Activated CD4-positive, alpha-beta T cell treated with anti-CD3 and anti-CD28 coated beads, Interleukin-2, amount 10 ng/mL, durations not matched to agents 24 days and 14 days (primary cell): ENCODE measurements at regions of chr13 and their contacts with region 1.

Region 1: GRCh38 chr13:41222259-41222852 is 28.0 kb upstream of the KBTBD7 start:
- DNase-seq: peak; percentile 86
- H3K4me3 Mint-ChIP-seq: no peak overlapping the region
- H3K27ac Mint-ChIP-seq: no peak overlapping the region
- H3K4me1 Mint-ChIP-seq: no peaks in the 10 kb centered on the region
- H3K27me3 Mint-ChIP-seq: no peaks in the 10 kb centered on the region

Region 2: GRCh38 chr13:40922437-40923040 is 299.8 kb before region 1 on chr13:
- intact Hi-C with region 1: no loop called
- DNase-seq: no peak
- H3K4me3 Mint-ChIP-seq: peak overlapping the region; percentile 73
- H3K27ac Mint-ChIP-seq: peak overlapping the region; percentile 80
- H3K4me1 Mint-ChIP-seq: peaks cover 13% of the 10 kb centered on the region
- H3K27me3 Mint-ChIP-seq: no peaks in the 10 kb centered on the region

Region 3: GRCh38 chr13:41054212-41054877 is 168.0 kb before region 1 on chr13:
- intact Hi-C with region 1: loop called (anchors 1 kb)
- DNase-seq: peak; percentile 85
- H3K4me3 Mint-ChIP-seq: no peak overlapping the region
- H3K27ac Mint-ChIP-seq: no peak overlapping the region
- H3K4me1 Mint-ChIP-seq: peaks cover 47% of the 10 kb centered on the region
- H3K27me3 Mint-ChIP-seq: no peaks in the 10 kb centered on the region

Region 4: GRCh38 chr13:41075034-41075433 is 147.3 kb before region 1 on chr13:
- intact Hi-C with region 1: loop called (anchors 1 kb)
- DNase-seq: peak; percentile 64
- H3K4me3 Mint-ChIP-seq: no peak overlapping the region
- H3K27ac Mint-ChIP-seq: no peak overlapping the region
- H3K4me1 Mint-ChIP-seq: no peaks in the 10 kb centered on the region
- H3K27me3 Mint-ChIP-seq: no peaks in the 10 kb centered on the region

Region 5: DNA sequence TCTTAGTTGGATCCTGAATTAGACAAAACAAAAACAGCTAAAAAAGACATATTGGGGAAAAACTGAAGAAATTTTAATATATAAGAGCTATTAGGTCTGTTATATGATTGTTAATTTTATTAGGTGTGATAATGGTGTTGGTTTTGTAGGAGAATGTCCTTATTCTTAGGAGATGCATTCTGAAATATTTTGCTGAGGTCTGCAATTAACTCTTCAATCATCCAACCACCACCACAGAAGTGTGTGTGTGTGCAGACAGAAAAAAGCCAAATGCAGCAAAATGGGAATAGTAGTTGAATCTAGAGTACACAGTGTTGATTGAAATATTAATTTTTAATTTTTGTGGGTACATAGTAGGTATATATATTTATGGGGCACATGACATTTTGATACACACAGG is 15.9 kb before region 1 on chr13:
- intact Hi-C with region 1: no loop called
- DNase-seq: no peak
- H3K4me3 Mint-ChIP-seq: no peak overlapping the region
- H3K27ac Mint-ChIP-seq: no peak overlapping the region
- H3K4me1 Mint-ChIP-seq: no peaks in the 10 kb centered on the region
- H3K27me3 Mint-ChIP-seq: peaks cover 3% of the 10 kb centered on the region

Region 6: DNA sequence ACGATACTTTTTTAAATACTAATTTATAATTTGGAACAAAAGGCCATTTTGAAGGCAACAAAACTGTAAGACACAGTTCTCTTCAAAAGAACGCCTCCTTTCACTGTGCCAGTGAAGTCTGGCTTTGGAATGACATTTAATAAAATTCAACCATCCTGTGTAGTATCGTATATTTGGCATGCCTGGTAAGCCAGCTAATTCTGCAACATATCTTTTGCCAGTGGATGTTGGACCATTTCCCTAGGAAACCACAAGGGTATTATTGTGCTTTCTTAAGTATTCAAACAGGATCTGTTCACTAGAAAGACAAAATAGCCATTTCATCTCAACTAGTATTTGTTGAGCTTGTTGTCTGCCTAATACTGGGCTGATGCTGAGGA is 346.6 kb after region 1 on chr13:
- intact Hi-C with region 1: no loop called
- DNase-seq: no peak
- H3K4me3 Mint-ChIP-seq: no peak overlapping the region
- H3K27ac Mint-ChIP-seq: no peak overlapping the region
- H3K4me1 Mint-ChIP-seq: peaks cover 3% of the 10 kb centered on the region
- H3K27me3 Mint-ChIP-seq: no peaks in the 10 kb centered on the region